Vagina (tissue), 2 donors: ENCODE measurements at regions of chr10 and their contacts with region 1.

Region 1: GRCh38 chr10:987870-988666 is at the start of gene GTPBP4:
- DNase-seq: peak; percentile 96 to 99
- H3K4me3 ChIP-seq: peak within 1 kb of the TSS; percentile 98 to 99
- H3K27ac ChIP-seq: peak within 1 kb of the TSS; percentile 96
- H3K4me1 ChIP-seq: peaks cover 31% of the 10 kb centered on the region
- H3K27me3 ChIP-seq: no peaks in the 10 kb centered on the region
- CTCF ChIP-seq: peak in 1 of 3 experiments; percentile 44
- POLR2A ChIP-seq: peak in 1 of 2 donors; percentile 23
- total RNA-seq, gene GTPBP4: 24.8 TPM

Region 2: DNA sequence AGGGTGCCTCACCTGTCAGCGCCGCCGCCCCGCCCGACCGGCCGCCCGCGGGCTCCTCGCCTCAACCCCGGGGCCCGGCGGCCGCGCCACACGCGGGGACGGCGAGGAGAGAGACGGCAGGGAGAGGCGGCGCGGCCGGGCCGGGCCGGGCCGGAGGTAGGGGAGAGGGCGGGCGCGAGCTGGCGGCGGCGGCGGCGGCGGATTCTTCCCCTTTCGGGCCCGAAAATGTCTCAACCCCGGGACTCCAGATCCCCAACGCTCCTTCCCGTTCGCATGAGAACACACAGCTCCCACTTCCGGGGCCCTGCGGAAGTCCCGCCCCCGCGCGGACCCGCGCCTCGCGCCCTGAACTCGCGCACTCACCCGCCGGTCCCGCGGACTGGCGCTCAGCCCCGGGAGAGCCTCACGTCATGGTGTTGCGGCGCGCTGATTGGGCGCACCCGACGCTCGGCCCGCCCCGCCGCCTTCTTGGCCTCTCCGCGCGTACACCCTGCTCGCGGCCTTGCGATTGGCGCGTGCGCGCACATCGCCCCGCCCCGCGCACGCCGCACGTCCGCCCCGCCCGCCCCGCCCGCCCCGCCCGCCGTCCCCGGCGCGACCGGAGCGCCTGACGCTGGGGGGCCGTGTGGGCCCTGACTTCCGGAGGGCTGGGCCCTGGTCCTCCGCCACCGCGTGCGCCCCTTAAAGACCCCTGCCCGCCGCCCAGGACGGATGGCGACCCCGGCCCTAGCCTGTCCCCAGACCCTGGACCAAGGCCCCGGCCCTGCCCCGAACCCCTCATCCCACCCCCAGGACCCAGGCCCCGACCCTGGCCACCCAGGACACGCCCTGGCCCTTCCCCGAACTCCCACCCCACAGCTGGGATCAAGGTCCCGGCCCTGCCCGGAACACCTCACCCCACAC is 56.4 kb before region 1 on chr10 and contains the start of gene LARP4B:
- intact Hi-C with region 1: loop called (anchors 5 kb)
- DNase-seq: peak in 1 of 2 donors; percentile 96
- H3K4me3 ChIP-seq: peak within 1 kb of the TSS; percentile 89 to 91
- H3K27ac ChIP-seq: peak within 1 kb of the TSS; percentile 99
- H3K4me1 ChIP-seq: peaks cover 52% of the 10 kb centered on the region
- H3K27me3 ChIP-seq: no peaks in the 10 kb centered on the region
- CTCF ChIP-seq: no peak
- POLR2A ChIP-seq: peak in 1 of 2 donors; percentile 68
- total RNA-seq, gene LARP4B: 78.3 TPM

Region 3: DNA sequence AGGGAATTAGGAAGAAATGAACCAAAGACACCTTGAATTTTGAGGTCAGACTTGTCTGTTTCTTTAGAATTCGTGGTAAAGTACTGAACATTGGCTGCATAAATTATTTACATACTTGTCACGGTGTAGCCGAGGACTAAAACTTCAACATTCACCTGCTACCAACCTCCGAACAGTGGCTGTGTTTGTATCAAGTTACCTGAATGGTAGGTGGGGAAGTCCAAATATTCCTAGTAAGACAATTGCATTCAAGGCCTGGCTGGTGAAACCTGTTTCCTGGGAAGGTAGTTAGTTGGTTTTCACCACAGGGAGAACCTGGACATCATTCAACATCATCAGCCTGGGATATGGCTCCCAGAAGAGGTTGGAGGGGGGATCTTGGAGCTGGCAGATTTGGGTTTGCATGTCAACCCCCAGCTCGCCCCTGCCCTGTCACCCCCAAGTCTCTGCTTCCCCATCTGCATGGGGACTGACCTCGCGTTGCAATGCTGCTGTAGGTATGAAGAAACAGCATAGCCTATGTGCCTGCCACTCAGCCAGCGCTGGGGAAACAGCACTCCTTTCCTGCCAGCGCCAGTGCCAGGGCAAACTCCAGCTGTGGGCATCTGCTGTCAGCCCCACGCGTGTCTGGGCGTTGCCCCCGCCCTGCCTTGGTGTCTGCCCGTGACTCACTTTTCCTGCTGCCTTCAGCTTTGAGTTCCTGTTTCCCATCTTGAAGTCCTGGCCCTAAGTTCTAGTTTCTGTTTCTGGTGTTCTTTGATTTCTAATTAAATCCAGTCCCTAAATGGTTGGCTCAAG is 43.8 kb before region 1 on chr10:
- intact Hi-C with region 1: no loop called
- DNase-seq: no peak
- H3K4me3 ChIP-seq: peak overlapping the region in 1 of 2 donors; percentile 11
- H3K27ac ChIP-seq: peak overlapping the region; percentile 70
- H3K4me1 ChIP-seq: peaks cover 14% of the 10 kb centered on the region
- H3K27me3 ChIP-seq: no peaks in the 10 kb centered on the region
- CTCF ChIP-seq: no peak
- POLR2A ChIP-seq: no peak

Region 4: DNA sequence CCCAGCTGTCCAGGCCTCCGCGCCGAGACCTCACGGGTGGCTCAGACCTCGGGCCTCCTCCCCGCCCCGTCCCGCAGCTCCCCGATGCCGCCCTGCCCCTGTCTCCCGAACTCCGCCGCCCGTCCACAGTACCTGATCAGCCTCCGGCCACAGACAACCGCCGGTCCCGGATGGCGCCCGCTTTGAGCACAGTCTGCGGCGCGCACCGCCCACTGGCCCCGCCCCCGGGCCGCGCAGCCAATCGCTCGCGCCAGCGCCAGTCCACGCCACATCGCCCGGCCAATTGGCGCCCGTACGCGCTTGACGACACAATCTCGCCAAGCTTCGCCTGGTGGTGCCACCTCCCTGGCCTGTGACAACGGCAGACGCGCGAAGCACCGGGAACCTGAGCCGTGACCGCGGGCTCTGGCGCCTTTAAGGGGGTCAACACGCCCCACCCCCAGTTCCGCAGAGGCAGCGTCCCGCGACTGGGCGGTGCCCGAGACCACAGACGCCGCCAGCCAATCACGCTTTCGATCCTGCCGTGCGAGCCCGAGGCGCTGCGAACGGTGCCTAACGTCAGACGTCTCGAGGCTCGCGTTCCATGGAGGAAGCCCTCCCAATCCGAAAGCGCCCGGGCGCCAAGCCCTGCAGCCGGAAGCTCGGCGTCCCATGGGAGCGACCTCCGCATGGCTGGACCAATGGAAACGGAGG is 60.8 kb after region 1 on chr10 and contains the start of gene IDI1:
- intact Hi-C with region 1: loop called (anchors 5 kb)
- DNase-seq: peak; percentile 98 to 99
- H3K4me3 ChIP-seq: peak within 1 kb of the TSS; percentile 74
- H3K27ac ChIP-seq: peak within 1 kb of the TSS; percentile 100
- H3K4me1 ChIP-seq: peaks cover 50% of the 10 kb centered on the region
- H3K27me3 ChIP-seq: no peaks in the 10 kb centered on the region
- CTCF ChIP-seq: no peak
- POLR2A ChIP-seq: peak; percentile 76 to 86
- total RNA-seq, gene IDI1: 50.3 TPM

Region 5: DNA sequence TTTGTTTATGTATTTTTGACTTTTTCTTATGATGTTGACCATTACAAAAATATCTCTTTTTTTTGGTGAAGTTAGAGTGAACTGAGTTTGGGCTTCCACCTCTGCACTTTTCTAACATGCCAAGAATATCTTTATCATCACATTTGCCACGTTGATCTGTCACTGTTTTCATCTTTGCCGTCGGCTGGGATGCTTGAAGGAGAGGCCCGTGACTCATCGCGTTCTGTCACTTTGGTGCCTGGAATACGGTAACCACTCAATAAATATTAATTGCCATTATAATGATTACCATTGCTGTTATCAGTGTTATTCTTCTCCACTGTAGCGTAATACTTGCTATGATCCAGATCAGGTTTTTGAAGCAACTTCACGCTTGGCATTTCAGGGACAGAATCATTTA is 1728.5 kb after region 1 on chr10:
- intact Hi-C with region 1: no loop called
- DNase-seq: no peak
- H3K4me3 ChIP-seq: no peak overlapping the region
- H3K27ac ChIP-seq: no peak overlapping the region
- H3K4me1 ChIP-seq: no peaks in the 10 kb centered on the region
- H3K27me3 ChIP-seq: no peaks in the 10 kb centered on the region
- CTCF ChIP-seq: no peak
- POLR2A ChIP-seq: no peak